ENCODE measurements at regions of chr6 and their contacts with region 1.

Region 1: GRCh38 chr6:75946146-75946831 is 126.2 kb downstream of the IMPG1 start:
- DNase-seq: no peak
- ATAC-seq: no peak
- H3K4me3 ChIP-seq: no peak overlapping the region
- H3K27ac ChIP-seq: no peak overlapping the region
- H3K4me1 ChIP-seq: peaks cover 0 to 3% (median 0%) of the 10 kb centered on the region in 9 donors
- H3K27me3 ChIP-seq: no peaks in the 10 kb centered on the region
- CTCF ChIP-seq: no peak

Region 2: GRCh38 chr6:75052491-75052890 is 893.8 kb before region 1 on chr6:
- intact Hi-C with region 1: no loop called
- DNase-seq: no peak
- ATAC-seq: no peak
- H3K4me3 ChIP-seq: no peak overlapping the region
- H3K27ac ChIP-seq: no peak overlapping the region
- H3K4me1 ChIP-seq: no peaks in the 10 kb centered on the region
- H3K27me3 ChIP-seq: no peaks in the 10 kb centered on the region
- CTCF ChIP-seq: no peak

Region 3: GRCh38 chr6:76351275-76351674 is 405.0 kb after region 1 on chr6:
- intact Hi-C with region 1: loop called in 1 of 10 experiments (anchors 5 kb)
- DNase-seq: no peak
- ATAC-seq: peak in 3 of 8 donors; percentile 37 to 57 (median 53)
- H3K4me3 ChIP-seq: no peak overlapping the region
- H3K27ac ChIP-seq: no peak overlapping the region
- H3K4me1 ChIP-seq: no peaks in the 10 kb centered on the region
- H3K27me3 ChIP-seq: no peaks in the 10 kb centered on the region
- CTCF ChIP-seq: peak in 7 of 9 donors; percentile 21 to 49 (median 36)